Endothelial cell of umbilical vein (primary cell): ENCODE measurements at regions of chr18 and their contacts with region 1.

Region 1: GRCh38 chr18:58180738-58181353 is 136.8 kb downstream of the NEDD4L start:
- DNase-seq: peak; percentile 67
- H3K4me3 ChIP-seq: no peak overlapping the region
- H3K27ac ChIP-seq: no peak overlapping the region
- H3K4me1 ChIP-seq: peaks cover 24% of the 10 kb centered on the region
- H3K27me3 ChIP-seq: no peaks in the 10 kb centered on the region
- CTCF ChIP-seq: peak; percentile 75 to 77
- POLR2A ChIP-seq: no peak

Region 2: GRCh38 chr18:58097121-58097906 is 83.5 kb before region 1 on chr18:
- CTCF ChIA-PET with region 1: no interaction called
- POLR2A ChIA-PET with region 1: no interaction called
- dilution Hi-C with region 1: no loop called
- intact Hi-C with region 1: no loop called
- DNase-seq: peak; percentile 73
- H3K4me3 ChIP-seq: no peak overlapping the region
- H3K27ac ChIP-seq: no peak overlapping the region
- H3K4me1 ChIP-seq: peaks cover 11% of the 10 kb centered on the region
- H3K27me3 ChIP-seq: no peaks in the 10 kb centered on the region
- CTCF ChIP-seq: no peak
- POLR2A ChIP-seq: no peak

Region 3: DNA sequence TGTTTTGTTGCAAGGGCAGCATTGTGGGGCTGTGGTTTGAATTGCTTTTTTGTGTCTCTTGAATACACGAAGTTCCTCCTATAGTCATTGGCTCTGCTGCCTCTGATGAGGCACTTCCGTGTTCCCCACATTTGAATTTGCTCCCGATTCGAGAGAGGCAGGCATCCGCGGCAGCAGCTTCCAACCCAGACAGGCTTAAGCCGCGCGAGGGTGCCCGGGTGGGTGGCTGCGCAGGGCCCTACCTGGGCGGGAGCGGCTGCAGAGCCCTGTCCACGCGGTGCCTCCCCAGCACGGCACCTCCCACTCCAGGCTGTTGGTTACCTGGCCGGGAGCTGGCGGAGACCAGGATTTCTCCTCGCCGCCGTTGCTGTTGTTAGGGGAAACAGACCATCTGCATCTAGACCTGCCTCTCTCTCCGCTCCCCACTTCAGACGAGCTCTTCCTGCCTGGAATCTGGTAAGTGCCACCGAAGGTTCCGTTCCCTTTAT is 14.5 kb after region 1 on chr18:
- CTCF ChIA-PET with region 1: interaction called, 16 read pairs
- POLR2A ChIA-PET with region 1: no interaction called
- dilution Hi-C with region 1: no loop called
- intact Hi-C with region 1: no loop called
- DNase-seq: no peak
- H3K4me3 ChIP-seq: peak overlapping the region in 2 of 3 experiments; percentile 5 to 52
- H3K27ac ChIP-seq: peak overlapping the region; percentile 24
- H3K4me1 ChIP-seq: peaks cover 31% of the 10 kb centered on the region
- H3K27me3 ChIP-seq: no peaks in the 10 kb centered on the region
- CTCF ChIP-seq: no peak
- POLR2A ChIP-seq: no peak

Region 4: GRCh38 chr18:59459369-59460079 is 1278.7 kb after region 1 on chr18:
- CTCF ChIA-PET with region 1: no interaction called
- POLR2A ChIA-PET with region 1: no interaction called
- dilution Hi-C with region 1: no loop called
- intact Hi-C with region 1: no loop called
- DNase-seq: peak; percentile 28
- H3K4me3 ChIP-seq: no peak overlapping the region
- H3K27ac ChIP-seq: no peak overlapping the region
- H3K4me1 ChIP-seq: no peaks in the 10 kb centered on the region
- H3K27me3 ChIP-seq: no peaks in the 10 kb centered on the region
- CTCF ChIP-seq: peak; percentile 17 to 40
- POLR2A ChIP-seq: no peak